Left cardiac atrium (tissue), 4 donors: ENCODE measurements at regions of chr10 and their contacts with region 1.

Region 1: DNA sequence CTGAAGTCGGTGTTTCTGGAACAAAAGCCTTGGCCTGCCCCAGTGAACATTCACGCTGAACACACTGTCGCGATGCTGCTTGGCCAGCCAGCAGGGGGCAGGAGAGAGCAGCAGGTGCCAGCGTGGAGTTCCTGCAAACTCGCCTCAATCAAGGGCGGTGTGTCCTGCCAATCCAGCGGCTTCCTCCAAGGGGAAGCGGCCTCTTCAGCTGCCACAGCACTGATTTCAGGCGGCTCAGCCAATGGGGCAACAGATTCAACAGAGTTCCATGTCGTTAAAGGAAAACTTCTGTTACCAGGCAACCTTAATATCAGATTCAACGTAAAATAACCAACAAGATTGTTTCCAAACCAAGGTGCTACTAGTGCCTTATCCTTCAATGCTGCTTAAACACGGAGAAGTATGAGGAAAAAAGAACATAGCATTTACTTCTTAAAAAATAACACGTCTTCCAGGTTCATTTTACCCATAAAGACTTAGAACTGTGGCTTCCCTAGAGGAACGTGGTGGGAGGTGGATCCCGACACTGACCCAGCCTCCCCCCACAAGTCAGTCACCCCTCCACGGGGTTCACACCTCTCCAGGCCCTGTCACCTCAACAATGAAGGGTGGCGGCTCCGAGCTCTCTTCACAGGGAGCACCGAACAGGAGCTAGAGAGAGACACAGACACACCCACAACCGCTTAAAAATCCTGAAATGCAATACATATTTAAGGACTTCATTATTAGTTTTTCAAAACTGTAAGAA is 178.2 kb downstream of the DIP2C start:
- DNase-seq: peak; percentile 95
- ATAC-seq: peak; percentile 94 to 95

Region 2: DNA sequence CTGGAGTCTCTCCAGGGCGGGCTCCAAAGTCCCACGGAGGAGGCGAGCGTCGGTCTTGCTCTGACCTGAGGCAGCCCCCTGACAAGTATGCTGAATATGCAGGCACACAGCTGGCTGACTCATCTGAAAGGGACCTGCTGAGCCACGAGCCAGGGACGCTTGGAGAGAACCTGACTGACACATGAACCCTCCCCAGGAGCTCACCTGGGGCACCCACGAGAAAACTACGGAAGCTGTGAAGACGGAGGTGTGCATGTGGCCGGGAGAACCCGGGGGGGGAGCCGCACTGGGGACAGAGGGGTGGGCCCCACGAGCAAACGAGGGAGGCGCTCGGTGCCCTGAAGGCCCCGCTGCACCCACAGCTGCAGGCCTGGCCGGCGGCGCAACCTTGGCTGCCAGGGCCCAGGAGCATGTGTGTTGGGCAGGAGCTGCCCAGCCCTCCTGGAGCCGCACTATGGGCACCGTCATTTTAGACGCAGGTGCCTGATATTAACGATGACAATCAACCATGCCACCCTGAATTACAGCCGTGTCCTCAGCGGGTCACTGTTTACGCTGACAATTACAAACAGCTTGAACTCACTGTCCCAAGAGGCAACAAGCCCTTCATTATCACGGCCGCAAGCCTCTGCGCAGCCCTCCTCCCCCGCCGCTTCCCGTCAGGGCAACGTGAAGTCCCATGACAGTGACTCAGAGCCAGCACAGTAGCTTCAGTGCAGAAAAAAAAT is 113.5 kb after region 1 on chr10:
- intact Hi-C with region 1: loop called in 1 of 2 experiments (anchors 10 kb)
- DNase-seq: peak; percentile 82
- ATAC-seq: peak; percentile 86 to 88

Region 3: GRCh38 chr10:689433-690371 is 178.4 kb after region 1 on chr10 and contains the start of gene DIP2C:
- intact Hi-C with region 1: loop called (anchors 5 to 10 kb)
- DNase-seq: peak; percentile 85
- ATAC-seq: peak; percentile 86 to 88
- total RNA-seq, gene DIP2C: 21.6 to 30.5 TPM

Region 4: GRCh38 chr10:767211-767610 is 255.9 kb after region 1 on chr10:
- intact Hi-C with region 1: no loop called
- DNase-seq: no peak
- ATAC-seq: no peak

Region 5: GRCh38 chr10:797179-797578 is 285.9 kb after region 1 on chr10:
- intact Hi-C with region 1: loop called in 1 of 2 experiments (anchors 5 kb)
- DNase-seq: no peak
- ATAC-seq: no peak